Activated CD8-positive, alpha-beta T cell treated with anti-CD3 and anti-CD28 coated beads, Interleukin-2, amount 10 ng/mL, durations not matched to agents 7 days and 5 days (primary cell): ENCODE measurements at regions of chr11 and their contacts with region 1.

Region 1: GRCh38 chr11:102293873-102294601 is 23.2 kb upstream of the BIRC3 start:
- DNase-seq: peak; percentile 51
- ATAC-seq: peak; percentile 91
- H3K4me3 Mint-ChIP-seq: peak overlapping the region; percentile 73
- H3K27ac Mint-ChIP-seq: peak overlapping the region; percentile 88
- H3K4me1 Mint-ChIP-seq: peaks cover 25% of the 10 kb centered on the region
- H3K27me3 Mint-ChIP-seq: no peaks in the 10 kb centered on the region

Region 2: GRCh38 chr11:102279641-102280170 is 14.3 kb before region 1 on chr11:
- CTCF ChIA-PET with region 1: interaction called, 13 read pairs
- POLR2A ChIA-PET with region 1: no interaction called
- DNase-seq: no peak
- ATAC-seq: no peak
- H3K4me3 Mint-ChIP-seq: no peak overlapping the region
- H3K27ac Mint-ChIP-seq: no peak overlapping the region
- H3K4me1 Mint-ChIP-seq: peaks cover 10% of the 10 kb centered on the region
- H3K27me3 Mint-ChIP-seq: peaks cover 10% of the 10 kb centered on the region

Region 3: GRCh38 chr11:102317099-102317767 is 23.2 kb after region 1 on chr11 and contains the start of gene BIRC3:
- CTCF ChIA-PET with region 1: interaction called, 484 read pairs
- POLR2A ChIA-PET with region 1: interaction called, 23 read pairs
- DNase-seq: peak; percentile 92
- ATAC-seq: peak; percentile 90
- H3K4me3 Mint-ChIP-seq: peak within 1 kb of the TSS; percentile 89
- H3K27ac Mint-ChIP-seq: peak within 1 kb of the TSS; percentile 94
- H3K4me1 Mint-ChIP-seq: peaks cover 66% of the 10 kb centered on the region
- H3K27me3 Mint-ChIP-seq: no peaks in the 10 kb centered on the region
- total RNA-seq, gene BIRC3: 12.9 to 14.5 TPM

Region 4: DNA sequence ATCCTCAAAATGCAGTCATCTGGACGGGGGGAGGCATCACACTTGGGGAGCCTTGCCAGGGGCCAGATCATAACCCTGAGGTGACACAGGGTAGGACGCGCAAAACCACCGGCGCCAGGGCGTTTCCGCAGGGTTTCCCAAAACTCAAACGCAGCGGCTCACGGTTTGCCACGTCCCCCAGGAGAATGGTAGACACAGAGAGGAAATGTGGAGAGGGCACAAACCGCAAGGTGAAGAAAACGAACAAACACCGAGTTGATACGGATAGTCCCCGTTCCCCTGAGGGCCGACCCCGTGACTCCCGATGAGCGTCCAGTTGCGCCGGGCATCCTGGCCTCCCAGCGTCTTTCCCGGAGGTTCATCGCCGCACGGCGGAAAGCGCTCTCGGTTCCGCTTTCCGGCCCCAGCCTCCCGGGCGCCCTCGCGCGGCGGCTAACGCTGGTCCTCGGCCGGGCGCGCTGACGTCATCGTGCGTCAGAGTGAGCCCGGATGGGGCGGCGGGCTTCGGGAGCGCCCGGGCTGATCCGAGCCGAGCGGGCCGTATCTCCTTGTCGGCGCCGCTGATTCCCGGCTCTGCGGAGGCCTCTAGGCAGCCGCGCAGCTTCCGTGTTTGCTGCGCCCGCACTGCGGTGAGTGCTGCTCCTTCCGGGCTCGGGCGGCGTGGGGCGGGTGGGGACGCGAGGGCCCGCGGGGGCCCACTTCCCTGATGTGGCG is 52.9 kb after region 1 on chr11 and contains the start of gene BIRC2:
- CTCF ChIA-PET with region 1: interaction called, 157 read pairs
- POLR2A ChIA-PET with region 1: no interaction called
- DNase-seq: peak; percentile 95
- ATAC-seq: peak; percentile 95
- H3K4me3 Mint-ChIP-seq: peak within 1 kb of the TSS; percentile 97
- H3K27ac Mint-ChIP-seq: peak within 1 kb of the TSS; percentile 98
- H3K4me1 Mint-ChIP-seq: peaks cover 35% of the 10 kb centered on the region
- H3K27me3 Mint-ChIP-seq: no peaks in the 10 kb centered on the region
- total RNA-seq, gene BIRC2: 28.3 to 30.4 TPM

Region 5: DNA sequence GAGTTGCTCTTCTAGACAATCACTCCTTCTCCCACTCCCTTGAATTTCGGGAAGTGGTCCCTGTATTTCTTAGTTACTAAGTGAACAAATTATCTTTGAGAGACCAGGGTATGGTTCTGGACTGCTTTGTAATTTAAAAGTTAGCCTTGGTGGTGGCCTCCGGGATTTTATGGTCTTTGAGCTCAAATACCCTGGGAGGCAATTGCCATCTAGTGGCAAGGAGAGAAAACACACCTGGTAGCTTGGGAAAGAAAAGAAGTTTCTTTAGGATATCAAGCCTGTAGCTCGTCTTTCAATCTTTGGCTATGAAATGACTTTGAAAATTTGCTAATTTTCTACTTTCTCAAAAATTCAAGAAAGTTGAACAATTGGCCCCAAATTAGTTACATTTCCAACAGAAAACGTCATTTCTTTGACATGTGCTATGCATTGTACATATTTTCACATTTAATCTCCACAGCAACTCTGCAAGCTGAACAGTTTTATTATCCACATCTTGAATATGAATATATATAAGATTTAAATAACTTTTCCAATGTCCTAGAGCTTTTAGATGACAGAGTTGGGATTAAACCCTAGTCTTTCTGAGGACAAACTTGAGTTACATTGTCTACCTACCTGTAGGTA is 372.4 kb after region 1 on chr11:
- CTCF ChIA-PET with region 1: interaction called, 25 read pairs
- POLR2A ChIA-PET with region 1: no interaction called
- DNase-seq: peak; percentile 38
- ATAC-seq: peak; percentile 36
- H3K4me3 Mint-ChIP-seq: no peak overlapping the region
- H3K27ac Mint-ChIP-seq: no peak overlapping the region
- H3K4me1 Mint-ChIP-seq: no peaks in the 10 kb centered on the region
- H3K27me3 Mint-ChIP-seq: peaks cover 19% of the 10 kb centered on the region